Esophagus squamous epithelium (tissue), 5 donors: ENCODE measurements at regions of chr22 and their contacts with region 1.

Region 1: GRCh38 chr22:45101515-45102227 is 62.1 kb upstream of the NUP50 start:
- DNase-seq: no peak
- H3K4me3 ChIP-seq: no peak overlapping the region
- H3K27ac ChIP-seq: no peak overlapping the region
- H3K4me1 ChIP-seq: peaks cover 0 to 9% (median 0%) of the 10 kb centered on the region in 3 donors
- H3K27me3 ChIP-seq: peaks cover 0 to 63% (median 0%) of the 10 kb centered on the region in 4 donors
- CTCF ChIP-seq: peak in 4 of 6 experiments; percentile 44 to 61 (median 55)
- POLR2A ChIP-seq: no peak

Region 2: GRCh38 chr22:45254789-45255278 is 153.2 kb after region 1 on chr22:
- intact Hi-C with region 1: loop called (anchors 10 kb)
- DNase-seq: no peak
- H3K4me3 ChIP-seq: no peak overlapping the region
- H3K27ac ChIP-seq: no peak overlapping the region
- H3K4me1 ChIP-seq: peaks cover 0 to 2% (median 0%) of the 10 kb centered on the region in 3 donors
- H3K27me3 ChIP-seq: no peaks in the 10 kb centered on the region
- CTCF ChIP-seq: no peak
- POLR2A ChIP-seq: no peak